AG04449 (cell line): ENCODE measurements at regions of chr2 and their contacts with region 1.

Region 1: GRCh38 chr2:55050133-55050994 is at the start of gene RTN4:
- DNase-seq: peak; percentile 95
- H3K4me3 ChIP-seq: peak within 1 kb of the TSS; percentile 92
- CTCF ChIP-seq: peak; percentile 25

Region 2: GRCh38 chr2:55099878-55100820 is 49.8 kb after region 1 on chr2:
- CTCF ChIA-PET with region 1: interaction called, 12 read pairs
- POLR2A ChIA-PET with region 1: interaction called, 13 read pairs
- DNase-seq: no peak
- H3K4me3 ChIP-seq: no peak overlapping the region
- CTCF ChIP-seq: no peak

Region 3: DNA sequence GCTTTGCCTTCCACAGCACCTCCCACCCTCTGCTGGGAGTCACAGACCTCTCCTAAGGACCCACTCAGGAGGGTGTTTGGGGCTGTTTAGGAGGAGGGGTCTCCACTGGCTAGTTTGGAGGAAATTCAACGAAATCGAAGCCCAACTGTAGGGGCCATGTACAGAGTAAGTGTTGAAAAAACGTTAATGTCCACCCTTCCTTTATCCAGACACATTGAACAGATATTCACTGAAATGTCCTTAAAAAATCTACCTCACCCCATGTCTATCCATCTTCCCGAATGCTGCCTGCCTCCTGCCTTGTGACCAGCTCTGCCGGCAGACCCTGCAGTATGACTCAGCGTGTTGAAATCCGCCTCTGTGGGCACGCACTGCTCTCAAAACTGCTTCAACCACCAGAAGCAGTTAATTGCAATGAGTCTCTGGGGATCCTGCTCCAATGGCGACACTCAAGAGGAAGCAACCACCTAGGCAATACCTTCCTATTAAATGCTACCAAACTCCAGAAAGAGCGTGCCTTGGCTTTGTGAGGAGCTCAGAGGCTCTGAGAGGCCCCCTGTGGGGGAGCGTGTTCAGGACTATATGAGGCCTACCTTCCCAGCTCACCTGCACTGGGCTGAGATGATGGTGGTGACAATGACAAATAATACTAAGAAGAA is 61.3 kb after region 1 on chr2:
- CTCF ChIA-PET with region 1: interaction called, 4 read pairs
- POLR2A ChIA-PET with region 1: interaction called, 14 read pairs
- DNase-seq: peak; percentile 84
- H3K4me3 ChIP-seq: no peak overlapping the region; the same call in 1 of the 2 replicates
- CTCF ChIP-seq: no peak

Region 4: GRCh38 chr2:55153584-55154295 is 103.4 kb after region 1 on chr2:
- CTCF ChIA-PET with region 1: interaction called, 7 read pairs
- POLR2A ChIA-PET with region 1: interaction called, 39 read pairs
- DNase-seq: no peak
- H3K4me3 ChIP-seq: no peak overlapping the region
- CTCF ChIP-seq: no peak